Heart right ventricle (tissue), 16 donors: ENCODE measurements at regions of chr15 and their contacts with region 1.

Region 1: DNA sequence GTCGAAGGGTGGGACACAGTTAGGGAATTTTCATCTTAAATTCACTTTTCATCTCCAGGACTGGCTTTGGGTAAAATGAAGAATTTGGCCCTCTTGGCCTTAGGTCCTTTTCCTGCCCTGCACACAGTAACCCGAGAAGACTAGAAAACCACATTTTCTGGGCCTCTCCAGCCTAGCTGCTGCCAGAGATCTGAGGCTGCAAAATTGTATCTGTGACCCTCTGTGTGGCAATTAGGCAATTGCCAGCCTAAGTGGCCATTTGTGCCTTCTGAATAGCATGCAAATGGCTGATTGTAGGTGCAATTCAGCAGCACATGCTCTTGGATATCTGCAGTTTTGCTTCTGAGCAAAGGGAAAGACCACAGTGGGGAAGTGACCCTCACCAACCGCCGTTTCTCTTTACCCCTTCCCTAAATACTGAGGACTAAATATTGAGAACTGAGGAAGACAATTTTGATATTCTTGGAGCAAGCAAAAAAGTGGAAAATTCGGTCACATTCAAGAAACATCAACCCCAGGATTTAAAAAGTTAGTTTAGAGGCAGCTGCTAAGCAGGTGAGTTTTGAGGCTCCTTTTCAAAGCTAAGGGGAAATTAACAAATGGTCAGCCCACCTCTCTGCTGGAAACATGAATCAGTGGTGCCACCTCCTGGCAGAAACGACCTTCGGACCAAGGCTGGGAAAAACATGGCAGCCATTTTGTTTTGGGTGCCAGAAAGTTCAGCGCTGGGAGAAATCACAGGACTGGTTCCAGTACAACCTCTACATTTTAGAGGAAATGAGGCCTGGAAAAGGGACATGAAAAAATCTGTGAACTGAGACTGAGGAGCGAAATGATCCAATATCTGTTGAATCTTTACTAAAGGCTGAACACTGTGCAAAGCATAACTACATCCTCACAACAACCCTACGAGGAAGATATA is 56.6 kb upstream of the PRTG start:
- DNase-seq: peak in 1 of 2 donors; percentile 17
- ATAC-seq: no peak
- H3K4me3 ChIP-seq: no peak overlapping the region
- H3K27ac ChIP-seq: no peak overlapping the region
- H3K4me1 ChIP-seq: peaks cover 0 to 2% (median 0%) of the 10 kb centered on the region in 9 donors
- H3K27me3 ChIP-seq: peaks cover 0 to 7% (median 0%) of the 10 kb centered on the region in 7 donors
- CTCF ChIP-seq: peak in 8 of 9 donors; percentile 13 to 66 (median 48)

Region 2: GRCh38 chr15:55654561-55655031 is 145.0 kb before region 1 on chr15:
- intact Hi-C with region 1: loop called in 4 of 10 experiments (anchors 2 to 5 kb)
- DNase-seq: no peak
- ATAC-seq: no peak
- H3K4me3 ChIP-seq: no peak overlapping the region
- H3K27ac ChIP-seq: no peak overlapping the region
- H3K4me1 ChIP-seq: no peaks in the 10 kb centered on the region
- H3K27me3 ChIP-seq: no peaks in the 10 kb centered on the region
- CTCF ChIP-seq: no peak

Region 3: DNA sequence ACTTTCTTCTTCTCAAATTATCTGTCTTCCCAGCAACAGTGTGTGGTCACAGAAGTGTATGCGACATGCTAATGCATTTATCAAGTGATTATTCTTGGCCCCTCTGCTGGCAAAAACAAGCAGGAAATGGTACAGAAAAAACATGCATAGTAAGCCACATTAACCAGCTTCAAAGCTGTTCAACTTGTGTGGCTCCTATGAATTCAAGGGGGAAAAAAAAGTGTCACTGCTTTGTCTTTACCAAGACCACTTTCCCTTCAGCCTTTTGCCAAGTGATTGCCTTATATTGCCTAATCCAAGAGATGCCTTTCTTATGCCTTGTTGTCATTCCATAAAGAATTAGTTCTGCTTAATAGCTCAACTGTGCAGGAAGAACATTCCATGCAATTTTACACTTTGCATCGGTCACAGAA is 95.7 kb before region 1 on chr15:
- intact Hi-C with region 1: no loop called
- DNase-seq: no peak
- ATAC-seq: no peak
- H3K4me3 ChIP-seq: no peak overlapping the region
- H3K27ac ChIP-seq: no peak overlapping the region
- H3K4me1 ChIP-seq: no peaks in the 10 kb centered on the region
- H3K27me3 ChIP-seq: no peaks in the 10 kb centered on the region
- CTCF ChIP-seq: no peak

Region 4: DNA sequence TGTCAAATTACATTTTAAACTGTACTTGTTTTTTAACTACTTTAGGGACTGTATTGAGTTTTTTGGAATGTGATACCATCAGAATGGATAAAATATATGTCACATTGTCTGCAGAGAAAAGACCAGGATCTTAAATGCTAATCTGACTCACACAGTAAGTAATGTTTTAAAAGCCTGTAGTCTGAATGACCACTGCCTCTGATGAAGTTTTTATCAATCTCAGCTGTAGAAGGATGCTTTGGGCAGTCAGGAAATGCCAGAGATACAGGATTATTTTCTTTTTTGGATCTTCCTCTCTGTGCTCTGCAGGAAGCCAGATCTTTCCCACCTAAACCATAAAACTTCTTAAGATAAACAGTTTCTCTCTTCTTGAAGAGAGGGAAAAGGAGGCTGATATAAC is 16.5 kb after region 1 on chr15:
- intact Hi-C with region 1: no loop called
- DNase-seq: no peak
- ATAC-seq: no peak
- H3K4me3 ChIP-seq: no peak overlapping the region
- H3K27ac ChIP-seq: no peak overlapping the region
- H3K4me1 ChIP-seq: no peaks in the 10 kb centered on the region
- H3K27me3 ChIP-seq: no peaks in the 10 kb centered on the region
- CTCF ChIP-seq: no peak

Region 5: GRCh38 chr15:56598991-56599390 is 799.4 kb after region 1 on chr15:
- intact Hi-C with region 1: no loop called
- DNase-seq: no peak
- ATAC-seq: no peak
- H3K4me3 ChIP-seq: no peak overlapping the region
- H3K27ac ChIP-seq: no peak overlapping the region
- H3K4me1 ChIP-seq: no peaks in the 10 kb centered on the region
- H3K27me3 ChIP-seq: no peaks in the 10 kb centered on the region
- CTCF ChIP-seq: no peak